Left lung (tissue), 14 donors: ENCODE measurements at regions of chr5 and their contacts with region 1.

Region 1: DNA sequence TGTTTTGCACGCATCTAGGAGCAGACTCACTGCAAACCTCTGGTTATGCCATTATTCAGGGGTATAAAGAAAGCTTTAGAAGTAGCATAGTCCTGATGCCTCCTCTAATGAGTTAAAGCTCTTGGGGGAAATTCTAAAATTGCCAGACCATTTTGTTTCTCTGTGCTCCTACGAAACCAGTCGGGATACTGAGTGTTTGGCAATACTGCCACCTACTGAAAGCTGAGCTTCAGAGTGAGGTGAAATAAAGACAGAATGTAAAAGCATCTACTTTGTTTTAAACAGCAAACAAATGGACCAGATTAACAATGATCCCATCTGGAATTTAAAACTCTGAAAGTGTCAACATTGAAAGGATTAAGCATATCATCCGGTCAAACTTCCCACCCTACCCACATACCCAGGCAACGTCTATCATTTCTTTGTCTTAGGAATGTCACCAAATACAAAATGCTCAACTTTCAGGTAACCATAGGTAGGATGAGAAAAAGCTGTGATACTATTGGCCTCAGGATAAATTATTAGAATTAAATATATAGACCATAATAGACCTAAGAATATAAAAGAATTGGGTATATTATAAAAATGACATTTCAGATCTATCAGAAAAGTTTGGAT is 77.8 kb upstream of the SHISAL2B start:
- DNase-seq: peak in 2 of 4 donors; percentile 54 to 82
- ATAC-seq: peak; percentile 84
- H3K4me3 ChIP-seq: no peak overlapping the region
- H3K27ac ChIP-seq: no peak overlapping the region
- H3K4me1 ChIP-seq: no peaks in the 10 kb centered on the region
- H3K27me3 ChIP-seq: no peaks in the 10 kb centered on the region
- CTCF ChIP-seq: peak; percentile 17 to 60

Region 2: GRCh38 chr5:64229163-64229774 is 383.2 kb before region 1 on chr5:
- intact Hi-C with region 1: loop called in 1 of 2 experiments (anchors 5 kb)
- DNase-seq: peak in 2 of 4 donors; percentile 27 to 37
- ATAC-seq: peak; percentile 40
- H3K4me3 ChIP-seq: no peak overlapping the region
- H3K27ac ChIP-seq: no peak overlapping the region
- H3K4me1 ChIP-seq: no peaks in the 10 kb centered on the region
- H3K27me3 ChIP-seq: no peaks in the 10 kb centered on the region
- CTCF ChIP-seq: peak in 1 of 2 donors; percentile 53

Region 3: GRCh38 chr5:64417390-64417789 is 195.1 kb before region 1 on chr5:
- intact Hi-C with region 1: no loop called
- DNase-seq: peak in 2 of 4 donors; percentile 34 to 35
- ATAC-seq: peak; percentile 70
- H3K4me3 ChIP-seq: no peak overlapping the region
- H3K27ac ChIP-seq: no peak overlapping the region
- H3K4me1 ChIP-seq: no peaks in the 10 kb centered on the region
- H3K27me3 ChIP-seq: no peaks in the 10 kb centered on the region
- CTCF ChIP-seq: no peak

Region 4: DNA sequence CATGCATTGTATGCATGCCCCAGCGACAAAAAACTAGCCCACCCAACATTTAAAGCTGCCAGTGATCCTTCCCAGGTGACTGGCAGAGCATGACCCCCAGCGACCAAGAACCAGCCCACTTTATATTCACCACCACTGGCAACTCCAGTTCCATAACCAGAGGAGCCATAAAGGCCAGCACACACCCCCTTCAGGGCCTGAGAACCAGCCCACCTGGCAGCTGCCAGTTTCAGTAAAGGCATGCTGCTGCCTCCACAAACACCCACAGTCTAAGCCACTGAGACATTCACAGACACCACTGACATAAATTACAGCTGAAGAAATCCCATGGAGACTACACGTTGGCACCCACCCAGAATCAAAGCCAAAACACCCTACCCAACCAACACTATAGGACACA is 153.5 kb before region 1 on chr5:
- intact Hi-C with region 1: no loop called
- DNase-seq: no peak
- ATAC-seq: no peak
- H3K4me3 ChIP-seq: no peak overlapping the region
- H3K27ac ChIP-seq: no peak overlapping the region
- H3K4me1 ChIP-seq: no peaks in the 10 kb centered on the region
- H3K27me3 ChIP-seq: no peaks in the 10 kb centered on the region
- CTCF ChIP-seq: no peak